Heart right ventricle (tissue), 16 donors: ENCODE measurements at regions of chr11 and their contacts with region 1.

Region 1: GRCh38 chr11:78525709-78526108 is 49.0 kb downstream of the NARS2 start:
- DNase-seq: no peak
- ATAC-seq: no peak
- H3K4me3 ChIP-seq: no peak overlapping the region
- H3K27ac ChIP-seq: no peak overlapping the region
- H3K4me1 ChIP-seq: no peaks in the 10 kb centered on the region
- H3K27me3 ChIP-seq: no peaks in the 10 kb centered on the region
- CTCF ChIP-seq: no peak

Region 2: DNA sequence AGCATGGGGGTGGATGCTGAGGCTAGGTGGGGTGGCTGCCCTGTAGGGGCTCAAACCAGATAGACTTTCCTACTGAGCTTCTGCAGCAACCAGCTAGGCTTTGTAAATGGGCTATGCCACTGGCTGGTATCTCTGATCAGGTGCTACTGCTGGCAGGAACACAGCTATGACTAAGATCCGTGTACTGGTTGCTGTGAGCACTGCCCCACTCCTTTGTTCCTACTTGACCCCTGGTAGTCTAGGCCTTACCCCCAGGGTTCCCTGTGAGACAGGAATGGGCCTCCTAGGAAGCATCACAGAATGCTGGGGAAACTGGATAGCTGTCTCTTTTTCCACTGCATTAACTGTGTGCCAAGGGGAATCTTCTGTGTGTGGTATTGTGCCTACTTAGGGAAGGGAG is 49.6 kb before region 1 on chr11:
- intact Hi-C with region 1: loop called in 1 of 10 experiments (anchors 10 kb)
- DNase-seq: no peak
- ATAC-seq: peak in 4 of 8 donors; percentile 31 to 73 (median 51)
- H3K4me3 ChIP-seq: no peak overlapping the region
- H3K27ac ChIP-seq: no peak overlapping the region
- H3K4me1 ChIP-seq: no peaks in the 10 kb centered on the region
- H3K27me3 ChIP-seq: no peaks in the 10 kb centered on the region
- CTCF ChIP-seq: no peak